Mammary epithelial cell (primary cell): ENCODE measurements at regions of chr9 and their contacts with region 1.

Region 1: DNA sequence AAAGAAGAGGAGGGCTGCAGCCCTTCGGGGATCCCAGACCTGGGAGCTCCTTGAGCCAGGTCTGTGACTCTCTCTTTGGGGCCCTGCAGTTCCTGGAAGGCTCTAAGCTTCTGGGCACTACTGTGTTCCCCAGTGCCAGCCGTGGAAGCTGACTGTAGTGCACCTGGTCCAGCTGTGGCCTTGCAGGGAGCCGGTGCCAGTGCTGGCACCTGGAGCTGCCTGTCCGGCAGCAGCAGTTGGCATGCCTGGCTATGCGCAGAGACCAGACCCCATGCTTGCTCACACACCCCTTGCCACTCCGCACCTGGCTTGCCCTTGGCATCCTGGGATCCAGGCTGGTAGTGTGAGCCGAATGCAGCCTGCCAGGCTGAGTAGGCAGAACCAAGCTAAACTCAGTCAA is 91.0 kb upstream of the PUM3 start:
- DNase-seq: no peak
- H3K4me3 ChIP-seq: no peak overlapping the region
- H3K27ac ChIP-seq: no peak overlapping the region
- H3K4me1 ChIP-seq: no peaks in the 10 kb centered on the region
- H3K27me3 ChIP-seq: no peaks in the 10 kb centered on the region
- CTCF ChIP-seq: no peak

Region 2: GRCh38 chr9:2889023-2889422 is 45.9 kb before region 1 on chr9:
- CTCF ChIA-PET with region 1: no interaction called
- dilution Hi-C with region 1: loop called (anchors 5 kb)
- in situ Hi-C with region 1: no loop called
- intact Hi-C with region 1: no loop called
- DNase-seq: no peak
- H3K4me3 ChIP-seq: no peak overlapping the region
- H3K27ac ChIP-seq: no peak overlapping the region
- H3K4me1 ChIP-seq: no peaks in the 10 kb centered on the region
- H3K27me3 ChIP-seq: no peaks in the 10 kb centered on the region
- CTCF ChIP-seq: no peak